ENCODE measurements at regions of chr5 and their contacts with region 1.

Region 1: DNA sequence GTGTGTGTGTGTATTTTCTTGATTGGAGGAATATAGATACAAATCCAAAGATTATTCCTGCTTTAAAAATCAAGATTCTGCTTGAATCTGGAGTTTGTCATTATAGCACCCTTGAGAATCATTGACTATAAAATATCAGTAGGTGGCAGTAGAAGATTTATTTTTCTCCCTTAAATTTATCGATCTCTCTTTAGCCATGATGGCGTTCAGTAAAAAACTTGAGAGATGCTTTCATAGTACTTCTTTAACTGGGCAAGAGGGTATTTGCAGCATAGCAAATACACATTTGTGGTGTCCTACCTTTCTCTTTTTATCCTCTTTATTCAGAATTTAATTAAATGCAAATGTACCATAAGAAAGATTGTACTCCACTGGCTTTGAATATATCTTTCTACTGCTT is 307.7 kb downstream of the ADGRV1 start:
- DNase-seq: no peak
- ATAC-seq: peak in 1 of 2 donors; percentile 39

Region 2: DNA sequence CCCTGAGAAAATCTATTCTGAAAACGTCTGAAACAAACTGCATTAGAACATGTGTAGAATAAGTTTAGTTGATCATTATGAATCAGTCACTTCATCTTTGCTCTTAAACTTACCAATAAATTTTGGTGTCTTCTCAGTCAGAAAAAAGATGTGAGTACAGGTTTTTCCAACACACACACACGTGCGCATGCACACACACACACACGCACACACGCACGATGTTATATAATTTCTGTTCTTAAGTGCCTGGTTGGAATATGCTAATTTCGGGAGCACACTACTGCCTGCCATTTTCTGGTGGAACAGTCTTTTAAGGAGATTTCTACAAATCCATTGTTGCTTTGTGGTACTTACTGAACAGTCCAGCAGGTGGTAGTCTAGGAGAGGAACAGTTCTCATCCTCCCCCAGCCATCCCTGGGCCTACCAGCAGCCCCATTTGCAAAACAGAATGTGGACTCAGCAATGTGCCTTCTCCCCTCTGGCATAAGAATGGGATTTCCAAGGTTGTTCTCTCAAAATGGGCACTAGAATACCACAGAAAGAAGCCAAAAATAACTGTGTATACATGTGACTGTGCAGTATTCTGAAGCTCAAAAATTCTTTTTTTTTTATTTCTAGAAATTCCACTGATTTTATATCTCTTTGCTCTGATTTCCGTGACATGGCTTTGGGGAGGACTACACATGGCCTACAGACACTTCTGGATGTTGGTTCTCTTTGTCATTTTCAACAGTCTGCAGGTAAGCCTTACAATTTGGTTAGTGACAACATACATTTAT is 235.5 kb after region 1 on chr5:
- intact Hi-C with region 1: loop called in 1 of 2 experiments (anchors 10 kb)
- DNase-seq: peak; percentile 72
- ATAC-seq: peak; percentile 96 to 98

Region 3: GRCh38 chr5:91419571-91420537 is 553.5 kb after region 1 on chr5:
- intact Hi-C with region 1: loop called in 1 of 2 experiments (anchors 2 kb)
- DNase-seq: peak; percentile 59
- ATAC-seq: peak in 1 of 2 donors; percentile 35

Measured in left cardiac atrium (tissue), 4 donors.